Posterior cingulate gyrus (tissue), 11 donors: ENCODE measurements at regions of chr4 and their contacts with region 1.

Region 1: DNA sequence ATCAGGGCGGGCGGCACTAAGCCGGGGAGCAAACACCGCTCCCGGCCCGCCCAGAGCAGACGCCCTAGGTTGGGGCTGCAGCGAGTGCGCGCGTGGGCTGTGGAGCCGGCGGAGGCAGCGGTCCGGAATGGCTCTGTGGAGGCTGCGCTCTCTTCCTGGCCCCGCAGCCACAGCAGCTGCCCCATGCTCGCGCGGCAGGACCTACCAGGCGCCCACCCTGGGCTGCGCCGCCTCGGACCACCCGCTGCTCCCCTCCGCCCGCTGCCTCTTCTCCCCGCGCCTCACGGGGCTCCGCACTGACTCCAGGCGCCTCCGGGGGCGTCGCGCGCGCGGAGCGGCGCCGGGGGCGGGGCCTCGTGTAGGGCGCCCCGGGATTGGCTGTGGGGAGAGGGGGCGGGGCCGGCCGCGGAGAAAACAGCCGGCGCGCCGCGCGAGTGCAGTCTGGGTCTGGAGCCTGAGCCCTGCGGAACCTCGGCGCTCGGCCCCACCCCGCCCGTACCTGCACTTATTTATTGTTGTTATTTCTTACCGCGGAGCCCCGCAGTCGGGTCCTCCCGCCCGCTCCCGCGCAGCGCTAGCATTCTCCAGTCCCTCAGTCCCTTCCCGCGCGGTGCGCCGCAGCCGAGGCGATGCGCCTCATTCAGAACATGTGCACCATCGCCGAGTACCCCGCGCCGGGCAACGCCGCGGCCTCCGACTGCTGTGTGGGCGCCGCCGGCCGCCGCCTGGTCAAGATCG is at the start of gene RASL11B:
- DNase-seq: peak; percentile 77 to 98 (median 86)

Region 2: DNA sequence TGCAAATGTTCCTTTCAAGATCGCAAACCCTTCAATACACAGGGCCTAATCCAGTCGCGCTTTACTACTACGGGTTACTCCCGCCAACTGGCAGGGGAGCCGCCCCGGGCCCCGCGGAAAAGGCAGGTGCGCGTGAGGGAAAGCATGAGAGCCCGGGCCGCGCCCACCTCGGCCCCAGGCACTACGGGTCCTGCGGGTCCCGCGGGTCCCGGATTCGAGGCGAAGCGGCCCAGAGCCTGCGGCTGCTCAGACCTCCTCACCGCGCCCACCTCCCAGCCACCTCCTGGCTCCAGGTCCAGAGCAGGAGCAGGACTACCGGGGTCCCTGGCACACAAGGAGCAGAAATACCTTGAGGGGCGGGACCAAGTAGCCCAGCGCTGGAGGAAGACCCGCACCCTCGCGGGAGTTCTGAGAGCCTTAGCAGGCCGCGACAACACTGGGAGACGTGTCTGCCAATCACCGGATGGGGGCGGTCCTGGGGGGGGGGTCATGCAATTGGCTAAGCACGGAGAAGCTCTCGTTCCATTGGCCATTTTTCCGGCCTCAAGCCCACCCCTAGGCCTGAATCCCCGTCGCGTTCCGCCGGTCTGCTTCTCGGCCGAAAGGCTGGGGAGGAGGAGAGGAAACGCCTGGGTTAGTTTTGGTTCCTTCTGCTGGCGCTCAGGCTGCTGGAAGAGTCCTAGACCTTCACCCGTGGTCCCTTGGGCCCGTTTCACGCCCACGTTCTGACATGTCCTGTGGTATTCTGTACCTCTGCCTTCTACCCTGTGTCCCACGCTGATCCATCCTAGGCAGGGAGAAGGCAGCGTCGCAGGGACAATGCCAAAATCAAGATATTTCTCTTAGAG is 139.9 kb before region 1 on chr4:
- intact Hi-C with region 1: loop called (anchors 2 kb)
- DNase-seq: peak; percentile 85 to 99 (median 92)

Region 3: GRCh38 chr4:52833936-52834525 is 28.0 kb before region 1 on chr4:
- intact Hi-C with region 1: no loop called
- DNase-seq: no peak

Region 4: DNA sequence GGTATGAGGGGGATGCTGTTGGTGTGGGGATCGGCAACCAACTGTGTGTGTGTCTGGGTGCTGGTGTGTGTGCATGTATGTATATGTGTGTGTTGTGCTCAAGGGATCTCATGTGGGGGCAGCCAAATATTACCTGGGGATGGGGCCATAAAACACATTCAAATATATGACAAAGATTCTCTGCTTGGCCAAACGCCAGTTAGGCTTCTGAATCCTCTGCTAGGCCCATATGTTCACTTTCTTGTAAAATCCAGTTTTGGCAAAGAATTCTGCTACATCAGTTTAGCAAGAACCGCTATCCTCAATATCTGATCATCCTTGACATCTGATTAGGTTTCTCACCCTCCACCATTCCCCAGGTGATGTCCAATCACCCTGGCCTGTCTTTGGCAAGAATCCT is 106.6 kb after region 1 on chr4:
- intact Hi-C with region 1: loop called (anchors 10 kb)
- DNase-seq: no peak